IMR-90 (cell line): ENCODE measurements at regions of chr18 and their contacts with region 1.

Region 1: GRCh38 chr18:77207540-77207939 is 42.1 kb upstream of the GALR1 start:
- DNase-seq: peak; percentile 65
- ATAC-seq: peak; percentile 42
- H3K4me3 ChIP-seq: no peak overlapping the region
- H3K27ac ChIP-seq: peak overlapping the region; percentile 36; the same call in 1 of the 2 replicates
- H3K4me1 ChIP-seq: peaks cover 15% of the 10 kb centered on the region
- H3K27me3 ChIP-seq: no peaks in the 10 kb centered on the region
- CTCF ChIP-seq: peak; percentile 62
- POLR2A ChIP-seq: no peak
- RAD21 ChIP-seq: peak; percentile 40

Region 2: DNA sequence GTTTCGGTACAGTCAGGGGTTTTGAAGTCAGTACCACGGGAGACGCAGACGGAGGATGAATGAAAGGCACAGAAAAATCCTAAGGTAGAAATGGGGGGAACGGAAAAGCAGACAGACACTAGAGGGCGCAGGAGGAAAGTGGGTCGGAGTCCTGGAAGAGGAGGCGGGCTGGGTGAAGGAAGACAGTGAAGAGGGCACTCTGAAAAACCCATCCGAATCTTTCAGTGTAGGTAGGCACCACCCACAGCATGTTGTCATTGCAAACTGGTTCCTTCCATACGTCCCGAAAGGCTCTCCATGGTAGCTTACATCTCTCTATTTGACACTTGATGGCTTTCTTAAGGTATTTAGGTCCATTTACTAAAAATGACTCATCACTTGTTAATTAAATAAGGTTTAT is 403.7 kb before region 1 on chr18:
- CTCF ChIA-PET with region 1: no interaction called
- POLR2A ChIA-PET with region 1: no interaction called
- dilution Hi-C with region 1: no loop called
- in situ Hi-C with region 1: loop called (anchors 25 kb)
- intact Hi-C with region 1: loop called (anchors 2 kb)
- DNase-seq: peak; percentile 52
- ATAC-seq: peak; percentile 73
- H3K4me3 ChIP-seq: no peak overlapping the region
- H3K27ac ChIP-seq: no peak overlapping the region
- H3K4me1 ChIP-seq: no peaks in the 10 kb centered on the region
- H3K27me3 ChIP-seq: no peaks in the 10 kb centered on the region
- CTCF ChIP-seq: peak; percentile 79
- POLR2A ChIP-seq: no peak
- RAD21 ChIP-seq: peak; percentile 62

Region 3: DNA sequence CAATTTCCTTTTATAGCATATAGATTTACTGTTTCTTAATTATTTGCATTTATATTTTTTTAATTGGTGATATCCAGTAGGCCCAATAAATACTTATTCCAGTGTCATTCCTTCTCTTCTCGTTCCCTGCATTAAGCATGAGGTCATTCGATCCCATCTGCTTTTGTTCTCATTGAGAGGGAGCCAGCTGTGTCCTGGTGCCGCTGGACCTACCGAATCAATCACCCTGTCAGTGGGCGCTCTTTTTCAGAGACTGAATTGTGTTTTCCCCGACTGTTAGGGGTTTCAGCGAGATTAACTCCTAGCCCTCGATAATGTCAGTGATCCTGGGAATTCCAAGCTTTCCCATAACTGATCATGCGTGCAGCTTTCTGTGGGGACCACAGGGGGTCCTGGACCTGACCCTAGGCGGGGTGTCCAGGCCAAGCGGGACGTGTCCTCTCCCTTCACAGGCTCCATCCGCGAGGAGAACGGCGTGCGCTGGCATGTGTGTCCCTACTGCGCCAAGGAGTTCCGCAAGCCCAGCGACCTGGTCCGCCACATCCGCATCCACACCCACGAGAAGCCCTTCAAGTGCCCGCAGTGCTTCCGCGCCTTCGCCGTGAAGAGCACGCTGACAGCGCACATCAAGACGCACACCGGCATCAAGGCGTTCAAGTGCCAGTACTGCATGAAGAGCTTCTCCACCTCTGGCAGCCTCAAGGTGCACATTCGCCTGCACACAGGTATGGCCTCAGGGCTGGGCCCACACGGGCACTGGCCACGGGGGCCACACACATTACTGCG is 312.8 kb before region 1 on chr18:
- CTCF ChIA-PET with region 1: no interaction called
- POLR2A ChIA-PET with region 1: no interaction called
- dilution Hi-C with region 1: no loop called
- in situ Hi-C with region 1: no loop called
- intact Hi-C with region 1: no loop called
- DNase-seq: no peak
- ATAC-seq: no peak
- H3K4me3 ChIP-seq: no peak overlapping the region
- H3K27ac ChIP-seq: no peak overlapping the region
- H3K4me1 ChIP-seq: no peaks in the 10 kb centered on the region
- H3K27me3 ChIP-seq: no peaks in the 10 kb centered on the region
- CTCF ChIP-seq: no peak
- POLR2A ChIP-seq: no peak
- RAD21 ChIP-seq: no peak

Region 4: GRCh38 chr18:77000527-77000926 is 207.0 kb before region 1 on chr18:
- CTCF ChIA-PET with region 1: interaction called, 28 read pairs
- POLR2A ChIA-PET with region 1: no interaction called
- dilution Hi-C with region 1: no loop called
- in situ Hi-C with region 1: loop called (anchors 5 kb)
- intact Hi-C with region 1: loop called (anchors 1 kb)
- DNase-seq: peak; percentile 32
- ATAC-seq: peak; percentile 86
- H3K4me3 ChIP-seq: no peak overlapping the region
- H3K27ac ChIP-seq: no peak overlapping the region
- H3K4me1 ChIP-seq: peaks cover 2% of the 10 kb centered on the region; the same call in 1 of the 2 replicates
- H3K27me3 ChIP-seq: no peaks in the 10 kb centered on the region; the same call in 1 of the 2 replicates
- CTCF ChIP-seq: peak; percentile 97
- POLR2A ChIP-seq: 0 out of 2 replicates have a peak, but pooled peaks have one; percentile 37
- RAD21 ChIP-seq: peak; percentile 97

Region 5: DNA sequence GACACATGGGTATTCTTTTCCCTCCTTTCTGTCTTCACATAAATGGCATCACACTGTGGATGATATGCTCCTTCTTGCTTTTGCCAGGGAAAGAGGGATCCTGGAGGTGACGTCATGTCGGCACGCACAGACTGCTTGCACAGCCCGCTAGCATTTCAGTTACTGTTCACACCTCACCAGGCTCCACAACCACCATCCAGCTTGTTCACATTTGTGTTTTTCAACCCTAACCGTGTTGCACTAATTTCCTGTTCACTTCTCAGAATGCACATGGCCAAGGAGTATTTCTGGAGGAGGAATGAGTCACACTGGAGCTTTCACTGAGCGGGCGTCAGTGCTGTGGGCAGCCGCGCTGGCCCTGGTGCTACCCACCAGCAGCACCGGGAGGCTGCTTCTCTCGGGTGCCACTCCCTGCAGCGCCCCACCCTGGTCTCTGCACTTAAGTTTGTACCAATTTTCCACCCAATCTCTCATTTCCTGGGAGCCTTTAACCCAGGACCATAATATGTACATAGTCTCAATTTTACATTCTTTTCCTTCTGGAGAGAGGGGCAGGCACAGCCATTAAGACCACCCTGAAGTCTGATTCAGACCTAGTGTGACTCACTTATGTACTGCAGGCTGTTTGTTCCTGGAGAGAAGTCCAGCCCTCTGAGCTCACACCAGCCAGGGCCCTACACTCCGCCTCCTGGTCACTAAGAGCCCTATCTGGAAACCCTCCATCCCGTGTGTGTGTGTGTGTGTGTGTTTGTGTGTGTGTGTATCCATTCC is 140.1 kb before region 1 on chr18:
- CTCF ChIA-PET with region 1: interaction called, 19 read pairs
- POLR2A ChIA-PET with region 1: no interaction called
- dilution Hi-C with region 1: no loop called
- in situ Hi-C with region 1: loop called (anchors 5 kb)
- intact Hi-C with region 1: loop called (anchors 1 kb)
- DNase-seq: peak; percentile 96
- ATAC-seq: peak; percentile 73
- H3K4me3 ChIP-seq: no peak overlapping the region
- H3K27ac ChIP-seq: peak overlapping the region; percentile 64
- H3K4me1 ChIP-seq: peaks cover 46% of the 10 kb centered on the region
- H3K27me3 ChIP-seq: no peaks in the 10 kb centered on the region
- CTCF ChIP-seq: peak; percentile 1; the same call in 1 of the 2 replicates
- POLR2A ChIP-seq: no peak
- RAD21 ChIP-seq: no peak; the same call in 1 of the 2 replicates

Region 6: GRCh38 chr18:77127769-77128671 is 79.5 kb before region 1 on chr18:
- CTCF ChIA-PET with region 1: interaction called, 4 read pairs
- POLR2A ChIA-PET with region 1: no interaction called
- dilution Hi-C with region 1: no loop called
- in situ Hi-C with region 1: no loop called
- intact Hi-C with region 1: loop called (anchors 5 kb)
- DNase-seq: peak; percentile 89
- ATAC-seq: peak; percentile 68
- H3K4me3 ChIP-seq: no peak overlapping the region
- H3K27ac ChIP-seq: peak overlapping the region; percentile 51; the same call in 1 of the 2 replicates
- H3K4me1 ChIP-seq: peaks cover 20% of the 10 kb centered on the region
- H3K27me3 ChIP-seq: peaks cover 14% of the 10 kb centered on the region
- CTCF ChIP-seq: no peak
- POLR2A ChIP-seq: no peak
- RAD21 ChIP-seq: no peak